Ascending aorta (tissue), 2 donors: ENCODE measurements at regions of chr17 and their contacts with region 1.

Region 1: DNA sequence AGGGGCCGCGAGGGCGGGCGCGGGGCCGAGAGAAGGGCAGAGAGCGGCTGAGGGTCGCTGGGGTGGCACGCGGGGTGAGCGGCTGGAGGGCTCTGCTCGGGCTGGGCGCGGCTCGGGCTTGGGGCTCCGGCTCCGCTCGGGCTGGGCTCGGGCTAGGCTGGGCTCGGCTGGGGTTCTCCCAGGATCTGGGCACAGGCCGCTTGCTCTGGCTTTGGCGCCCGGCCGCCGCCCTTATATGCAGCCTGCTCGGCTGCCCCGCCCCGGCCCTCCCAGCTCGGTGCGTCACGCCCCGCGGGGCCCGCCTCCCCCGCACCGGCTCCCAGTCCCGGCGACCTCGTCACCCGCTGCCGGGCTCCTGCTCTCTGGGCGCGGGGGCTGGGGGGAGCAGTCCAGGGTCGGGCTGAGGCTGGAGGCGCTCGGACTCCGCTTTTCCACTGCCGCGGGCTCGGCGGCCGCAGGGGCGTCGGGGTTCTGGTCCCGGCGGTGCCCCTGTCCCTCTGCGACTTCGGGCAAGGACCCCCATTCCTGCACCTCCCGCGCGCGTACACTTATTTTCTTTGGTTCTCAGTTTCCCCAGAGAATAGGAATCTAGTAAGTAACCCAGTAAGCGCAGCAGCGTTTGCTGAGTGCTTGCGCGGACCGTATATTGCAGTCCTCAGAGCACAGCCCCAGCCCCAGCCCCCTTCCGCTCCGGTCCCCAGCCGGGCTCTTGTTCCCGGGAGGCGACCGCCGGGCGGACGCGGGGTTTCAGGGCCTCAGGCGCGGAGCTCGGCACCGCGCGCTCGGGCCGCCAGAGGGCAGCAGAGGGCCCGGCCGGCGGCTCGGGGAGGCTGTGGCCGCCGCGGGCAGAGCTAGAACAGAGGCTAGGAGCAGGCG is at the start of gene RASD1:
- DNase-seq: peak; percentile 54 to 94
- H3K4me3 ChIP-seq: peak within 1 kb of the TSS; percentile 69 to 70
- H3K27ac ChIP-seq: peak within 1 kb of the TSS; percentile 65 to 78
- H3K4me1 ChIP-seq: peaks cover 6 to 9% of the 10 kb centered on the region in 2 donors
- H3K27me3 ChIP-seq: no peaks in the 10 kb centered on the region
- CTCF ChIP-seq: peak; percentile 78 to 94 (median 88)
- total RNA-seq, gene RASD1: 293 TPM

Region 2: GRCh38 chr17:17476865-17477467 is 19.5 kb before region 1 on chr17 and contains the start of gene MED9:
- intact Hi-C with region 1: loop called (anchors 1 kb)
- DNase-seq: peak; percentile 66 to 95
- H3K4me3 ChIP-seq: peak within 1 kb of the TSS; percentile 82 to 91
- H3K27ac ChIP-seq: peak within 1 kb of the TSS; percentile 76 to 78
- H3K4me1 ChIP-seq: peaks cover 10 to 11% of the 10 kb centered on the region in 2 donors
- H3K27me3 ChIP-seq: no peaks in the 10 kb centered on the region
- CTCF ChIP-seq: no peak
- total RNA-seq, gene MED9: 16.9 TPM

Region 3: GRCh38 chr17:17568749-17569195 is 72.3 kb after region 1 on chr17:
- intact Hi-C with region 1: loop called (anchors 1 kb)
- DNase-seq: no peak
- H3K4me3 ChIP-seq: no peak overlapping the region
- H3K27ac ChIP-seq: no peak overlapping the region
- H3K4me1 ChIP-seq: peaks cover 13 to 34% of the 10 kb centered on the region in 2 donors
- H3K27me3 ChIP-seq: no peaks in the 10 kb centered on the region
- CTCF ChIP-seq: peak; percentile 28 to 57 (median 43)

Region 4: DNA sequence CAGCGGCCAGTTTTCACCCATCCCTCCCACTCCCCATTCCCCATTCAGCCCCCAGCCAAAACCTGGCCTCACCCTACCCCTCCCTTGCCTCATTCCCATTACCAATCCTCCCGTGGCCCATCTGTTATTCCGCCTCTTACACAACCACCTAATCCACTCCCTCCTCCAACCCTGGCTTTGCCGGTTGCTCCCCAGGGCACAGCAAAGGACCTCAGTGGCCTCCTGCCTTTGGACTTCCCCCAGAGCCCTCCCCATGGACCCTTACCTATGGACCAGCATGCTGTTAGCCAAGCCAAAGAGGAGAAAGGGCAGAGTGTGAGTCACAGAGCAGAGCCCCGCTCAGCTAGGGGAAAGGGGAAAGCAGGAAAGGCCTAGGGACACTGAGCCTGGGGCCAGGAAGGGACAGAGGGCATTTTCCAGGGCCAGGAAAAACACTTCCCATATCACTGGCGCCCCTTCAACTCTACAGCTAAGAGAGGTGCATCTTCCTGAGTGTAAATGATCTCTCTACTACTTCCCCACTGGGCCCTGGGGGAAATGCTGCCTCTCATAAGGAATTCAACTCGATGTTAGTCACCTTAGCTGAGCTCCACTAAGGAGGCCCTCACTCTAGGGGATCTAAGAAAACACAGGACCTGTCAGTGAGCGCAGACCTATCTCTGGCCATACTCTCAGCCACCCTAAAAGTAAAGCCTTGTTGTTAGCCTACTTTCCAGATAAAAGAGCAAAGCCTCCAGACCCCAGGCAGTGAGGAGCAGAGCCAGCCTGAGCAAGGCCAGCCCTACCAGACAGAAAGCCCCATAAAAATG is 84.4 kb after region 1 on chr17:
- intact Hi-C with region 1: no loop called
- DNase-seq: no peak
- H3K4me3 ChIP-seq: no peak overlapping the region
- H3K27ac ChIP-seq: no peak overlapping the region
- H3K4me1 ChIP-seq: no peaks in the 10 kb centered on the region
- H3K27me3 ChIP-seq: no peaks in the 10 kb centered on the region
- CTCF ChIP-seq: no peak

Region 5: GRCh38 chr17:17613708-17614114 is 117.3 kb after region 1 on chr17:
- intact Hi-C with region 1: loop called (anchors 1 kb)
- DNase-seq: peak in 1 of 2 donors; percentile 71
- H3K4me3 ChIP-seq: no peak overlapping the region
- H3K27ac ChIP-seq: no peak overlapping the region
- H3K4me1 ChIP-seq: no peaks in the 10 kb centered on the region
- H3K27me3 ChIP-seq: no peaks in the 10 kb centered on the region
- CTCF ChIP-seq: peak; percentile 58 to 68 (median 61)